ENCODE measurements at regions of chr2 and their contacts with region 1.

Region 1: GRCh38 chr2:7044261-7045250 is 127.3 kb downstream of the RNF144A start:
- DNase-seq: peak; percentile 60 to 90 (median 77)
- H3K4me3 ChIP-seq: no peak overlapping the region
- H3K27ac ChIP-seq: no peak overlapping the region
- H3K4me1 ChIP-seq: peaks cover 0 to 5% of the 10 kb centered on the region in 2 donors
- H3K27me3 ChIP-seq: no peaks in the 10 kb centered on the region
- CTCF ChIP-seq: peak; percentile 88 to 96 (median 92)
- POLR2A ChIP-seq: no peak

Region 2: DNA sequence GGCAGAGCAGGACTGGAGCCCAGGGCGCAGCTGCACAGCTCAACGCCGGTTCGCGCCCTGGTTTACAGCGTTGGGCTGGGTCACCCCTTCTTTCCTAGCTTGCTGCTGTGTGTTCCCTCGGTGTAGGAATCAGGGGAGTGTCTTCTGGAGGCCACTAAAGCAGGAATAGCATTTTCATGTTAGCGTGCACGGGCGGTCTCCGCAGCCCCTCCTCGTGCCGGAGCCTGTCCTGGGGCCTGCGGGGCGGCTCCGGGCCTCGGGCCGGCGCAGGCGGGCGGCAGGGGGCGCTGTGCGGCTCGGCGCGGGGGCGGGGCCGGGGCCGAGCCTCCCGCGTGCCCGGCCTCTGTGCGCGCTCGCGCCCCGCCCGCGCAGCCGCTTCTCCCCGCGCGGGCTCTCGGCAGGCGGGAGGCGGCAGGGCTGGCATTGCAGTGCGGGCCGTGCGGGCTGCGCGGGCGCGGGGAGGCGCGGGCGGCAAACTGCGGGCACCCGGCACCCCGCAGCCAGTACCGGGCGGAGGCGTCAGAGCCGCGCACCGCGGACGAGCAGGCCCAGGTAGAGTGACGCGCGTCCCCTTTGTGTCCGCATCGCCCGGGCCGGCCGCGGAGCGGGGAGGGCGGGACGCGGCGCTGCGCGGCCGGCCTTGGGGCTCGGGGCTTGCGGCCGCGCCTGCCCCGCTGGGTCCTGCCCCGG is 127.3 kb before region 1 on chr2 and contains the start of gene RNF144A:
- intact Hi-C with region 1: loop called in 1 of 2 experiments (anchors 5 kb)
- DNase-seq: peak in 6 of 7 donors; percentile 35 to 76 (median 60)
- H3K4me3 ChIP-seq: peak within 1 kb of the TSS in 3 of 4 donors; percentile 26 to 95 (median 67)
- H3K27ac ChIP-seq: peak within 1 kb of the TSS; percentile 16 to 93 (median 88)
- H3K4me1 ChIP-seq: peaks cover 25 to 46% of the 10 kb centered on the region in 2 donors
- H3K27me3 ChIP-seq: no peaks in the 10 kb centered on the region
- CTCF ChIP-seq: peak in 5 of 6 experiments; percentile 21 to 66 (median 46)
- POLR2A ChIP-seq: peak; percentile 51 to 73
- total RNA-seq, gene RNF144A: 25.7 to 103 (median 60.3) TPM

Measured in adrenal gland (tissue), 19 donors.